Naive thymus-derived CD4-positive, alpha-beta T cell (primary cell): ENCODE measurements at regions of chr4 and their contacts with region 1.

Region 1: DNA sequence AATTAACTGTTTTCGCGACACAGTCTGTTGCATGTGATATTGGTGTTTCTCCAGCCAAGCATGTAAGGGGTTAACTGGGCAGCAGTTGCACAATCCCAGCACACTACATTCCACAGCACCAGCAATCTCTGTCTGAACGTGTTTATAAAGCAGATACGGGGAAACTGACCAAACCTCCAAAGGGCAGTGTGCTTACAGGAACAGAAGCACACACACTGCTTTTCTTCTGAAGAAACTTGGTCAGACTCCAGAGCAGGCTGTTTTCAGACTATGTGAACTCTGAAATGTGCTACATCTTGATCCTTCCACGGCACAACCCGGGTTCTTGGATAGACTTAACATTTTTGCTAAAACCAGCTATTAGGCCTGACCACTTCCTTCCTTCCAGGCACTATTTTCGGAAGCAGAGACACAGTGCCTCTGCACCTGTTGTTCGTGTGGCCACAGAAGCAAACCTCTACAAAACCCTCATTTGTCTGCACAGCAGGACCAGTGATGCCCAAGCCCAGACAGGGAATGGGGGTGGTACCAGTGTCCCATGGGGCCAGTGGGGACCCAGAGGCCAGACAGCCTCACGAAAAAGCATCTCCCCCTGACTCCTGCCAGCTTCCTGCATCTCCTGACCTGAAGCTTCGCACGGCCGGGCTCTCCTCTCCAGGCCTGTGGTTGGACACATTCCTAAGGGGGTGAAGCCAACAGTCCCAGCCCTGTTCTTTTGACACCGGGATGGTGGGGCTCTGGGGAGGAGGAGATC is 90.1 kb downstream of the IRF2 start:
- DNase-seq: peak in 1 of 9 donors; percentile 3
- ATAC-seq: peak; percentile 26
- H3K4me3 ChIP-seq: no peak overlapping the region
- H3K4me3 Mint-ChIP-seq: peak overlapping the region in 9 of 10 donors; percentile 8 to 68 (median 29)
- H3K27ac ChIP-seq: no peak overlapping the region
- H3K27ac Mint-ChIP-seq: peak overlapping the region in 8 of 9 donors; percentile 3 to 86 (median 60)
- H3K4me1 ChIP-seq: peaks cover 24 to 40% of the 10 kb centered on the region in 2 donors
- H3K4me1 Mint-ChIP-seq: peaks cover 41 to 73% (median 63%) of the 10 kb centered on the region in 7 donors
- H3K27me3 ChIP-seq: no peaks in the 10 kb centered on the region
- H3K27me3 Mint-ChIP-seq: no peaks in the 10 kb centered on the region

Region 2: DNA sequence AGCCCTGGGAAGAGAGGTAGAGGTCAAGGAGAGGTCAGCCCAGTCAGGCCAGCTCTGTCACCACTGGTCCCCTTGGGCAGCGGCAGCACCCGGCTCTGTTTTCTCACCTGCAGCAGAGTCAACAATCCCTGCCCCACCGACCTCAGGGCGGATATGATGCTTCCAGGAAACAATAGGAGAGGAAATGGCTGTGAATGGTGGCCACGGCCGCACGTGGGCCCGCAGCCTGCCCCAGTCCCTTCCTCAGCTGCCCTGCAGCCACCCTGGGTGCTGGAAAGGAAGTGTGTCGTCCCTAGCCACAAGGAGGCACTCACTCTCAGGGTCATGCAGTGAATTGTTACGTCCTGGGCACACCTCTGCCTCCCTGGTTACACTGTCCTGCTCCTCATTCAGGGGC is 74.1 kb before region 1 on chr4:
- CTCF ChIA-PET with region 1: no interaction called
- POLR2A ChIA-PET with region 1: no interaction called
- intact Hi-C with region 1: loop called in 1 of 2 experiments (anchors 5 kb)
- DNase-seq: peak in 5 of 9 donors; percentile 10 to 29 (median 25)
- ATAC-seq: peak; percentile 80
- H3K4me3 ChIP-seq: no peak overlapping the region
- H3K4me3 Mint-ChIP-seq: peak overlapping the region in 8 of 10 donors; percentile 1 to 73 (median 15)
- H3K27ac ChIP-seq: no peak overlapping the region
- H3K27ac Mint-ChIP-seq: peak overlapping the region; percentile 4 to 77 (median 44)
- H3K4me1 ChIP-seq: peaks cover 6 to 15% of the 10 kb centered on the region in 2 donors
- H3K4me1 Mint-ChIP-seq: peaks cover 22 to 63% (median 29%) of the 10 kb centered on the region in 7 donors
- H3K27me3 ChIP-seq: no peaks in the 10 kb centered on the region
- H3K27me3 Mint-ChIP-seq: no peaks in the 10 kb centered on the region